GM23248 (cell line): ENCODE measurements at regions of chr4 and their contacts with region 1.

Region 1: DNA sequence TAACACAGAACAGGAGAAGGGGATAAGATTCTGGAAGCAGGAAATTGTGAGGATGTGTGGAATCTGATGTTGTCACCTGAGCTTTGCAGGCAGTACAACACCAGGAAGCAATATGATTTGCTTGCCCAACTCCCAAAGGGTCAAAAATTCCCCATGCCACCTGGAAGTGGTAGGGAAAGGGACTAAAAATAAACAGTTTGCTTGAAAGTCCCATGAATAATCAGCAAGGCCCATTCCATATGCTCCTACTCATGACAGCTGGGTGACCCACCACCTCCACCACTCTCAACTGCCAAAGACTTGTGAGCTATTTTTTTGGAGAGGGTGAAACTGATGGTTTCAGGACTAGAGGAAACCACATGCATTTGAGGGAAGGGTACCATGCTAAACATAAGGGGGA is 168.4 kb downstream of the KCNIP4 start:
- DNase-seq: peak; percentile 47
- H3K4me3 ChIP-seq: no peak overlapping the region
- H3K27ac ChIP-seq: no peak overlapping the region
- H3K4me1 ChIP-seq: peaks cover 9% of the 10 kb centered on the region
- H3K27me3 ChIP-seq: no peaks in the 10 kb centered on the region

Region 2: DNA sequence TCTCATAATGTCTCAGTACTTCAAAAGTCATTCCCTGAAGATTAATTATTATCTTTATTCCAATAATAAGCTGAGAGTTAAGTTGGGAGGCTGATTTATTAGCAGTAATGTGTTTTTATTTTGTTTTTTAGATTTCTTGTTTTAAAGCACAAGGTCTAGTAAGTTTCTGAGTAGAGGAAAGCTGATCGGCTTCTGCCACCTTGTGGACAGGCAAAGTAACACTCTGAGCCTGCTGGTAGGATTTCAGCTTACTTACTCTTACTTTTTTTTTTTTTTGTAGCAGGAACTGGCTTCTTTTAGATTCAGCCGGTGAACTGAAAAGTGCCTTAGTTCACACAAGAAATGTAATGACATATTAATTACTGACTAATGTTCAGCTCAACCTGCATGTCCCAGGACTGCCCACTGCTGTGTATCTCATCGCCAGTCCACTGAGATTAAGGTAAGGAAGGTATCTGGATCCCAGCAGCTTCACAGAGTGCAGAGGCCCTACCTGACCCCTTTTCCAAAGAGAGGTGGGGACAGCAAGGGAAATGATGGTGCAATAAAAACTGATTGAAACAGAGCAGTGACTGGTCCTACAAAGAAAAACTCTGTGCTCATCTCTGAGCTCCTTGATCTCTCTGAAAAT is 609.2 kb after region 1 on chr4:
- in situ Hi-C with region 1: loop called (anchors 10 kb)
- DNase-seq: peak; percentile 83
- H3K4me3 ChIP-seq: no peak overlapping the region
- H3K27ac ChIP-seq: no peak overlapping the region
- H3K4me1 ChIP-seq: peaks cover 33% of the 10 kb centered on the region
- H3K27me3 ChIP-seq: no peaks in the 10 kb centered on the region

Region 3: GRCh38 chr4:22688236-22688635 is 908.1 kb after region 1 on chr4:
- in situ Hi-C with region 1: loop called (anchors 10 kb)
- DNase-seq: peak; percentile 47
- H3K4me3 ChIP-seq: no peak overlapping the region
- H3K27ac ChIP-seq: no peak overlapping the region
- H3K4me1 ChIP-seq: peaks cover 5% of the 10 kb centered on the region; the same call in 1 of the 2 replicates
- H3K27me3 ChIP-seq: peaks cover 23% of the 10 kb centered on the region